Activated CD4-positive, alpha-beta T cell treated with anti-CD3 and anti-CD28 coated beads, Interleukin-2, amount 10 ng/mL, durations not matched to agents 24 days and 14 days (primary cell): ENCODE measurements at regions of chr1 and their contacts with region 1.

Region 1: DNA sequence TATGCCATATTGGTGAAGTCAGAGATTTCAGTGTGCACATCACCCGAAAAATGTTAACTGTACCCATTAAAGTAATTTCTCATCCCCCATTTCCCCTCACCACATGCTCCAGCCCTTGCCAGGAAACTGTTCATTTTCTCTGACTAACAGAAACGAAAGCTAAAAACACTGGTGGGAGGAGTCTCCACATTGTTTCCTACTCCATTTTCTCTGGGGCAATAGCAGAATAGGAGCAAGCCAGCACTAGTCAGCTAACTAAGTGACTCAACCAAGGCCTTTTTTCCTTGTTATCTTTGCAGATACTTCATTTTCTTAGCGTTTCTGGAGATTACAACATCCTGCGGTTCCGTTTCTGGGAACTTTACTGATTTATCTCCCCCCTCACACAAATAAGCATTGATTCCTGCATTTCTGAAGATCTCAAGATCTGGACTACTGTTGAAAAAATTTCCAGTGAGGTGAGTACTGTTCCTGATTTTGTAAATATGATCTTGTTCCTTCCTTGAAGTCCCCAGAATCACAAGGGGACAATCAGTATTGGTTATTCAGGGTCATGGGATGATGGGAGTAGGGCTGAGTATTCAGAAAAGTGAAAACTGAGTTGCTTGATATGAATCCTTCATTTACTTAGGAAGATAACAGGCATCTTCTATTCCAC is at the start of gene IFI16:
- DNase-seq: peak; percentile 93
- H3K4me3 Mint-ChIP-seq: peak within 1 kb of the TSS; percentile 92
- H3K27ac Mint-ChIP-seq: peak within 1 kb of the TSS; percentile 98
- H3K4me1 Mint-ChIP-seq: peaks cover 52% of the 10 kb centered on the region
- H3K27me3 Mint-ChIP-seq: no peaks in the 10 kb centered on the region
- total RNA-seq, gene IFI16: 217 and 223 TPM in 2 replicates

Region 2: GRCh38 chr1:158716335-158716734 is 293.5 kb before region 1 on chr1:
- intact Hi-C with region 1: loop called (anchors 5 kb)
- DNase-seq: no peak
- H3K4me3 Mint-ChIP-seq: no peak overlapping the region
- H3K27ac Mint-ChIP-seq: peak overlapping the region; percentile 58
- H3K4me1 Mint-ChIP-seq: peaks cover 5% of the 10 kb centered on the region
- H3K27me3 Mint-ChIP-seq: peaks cover 31% of the 10 kb centered on the region

Region 3: DNA sequence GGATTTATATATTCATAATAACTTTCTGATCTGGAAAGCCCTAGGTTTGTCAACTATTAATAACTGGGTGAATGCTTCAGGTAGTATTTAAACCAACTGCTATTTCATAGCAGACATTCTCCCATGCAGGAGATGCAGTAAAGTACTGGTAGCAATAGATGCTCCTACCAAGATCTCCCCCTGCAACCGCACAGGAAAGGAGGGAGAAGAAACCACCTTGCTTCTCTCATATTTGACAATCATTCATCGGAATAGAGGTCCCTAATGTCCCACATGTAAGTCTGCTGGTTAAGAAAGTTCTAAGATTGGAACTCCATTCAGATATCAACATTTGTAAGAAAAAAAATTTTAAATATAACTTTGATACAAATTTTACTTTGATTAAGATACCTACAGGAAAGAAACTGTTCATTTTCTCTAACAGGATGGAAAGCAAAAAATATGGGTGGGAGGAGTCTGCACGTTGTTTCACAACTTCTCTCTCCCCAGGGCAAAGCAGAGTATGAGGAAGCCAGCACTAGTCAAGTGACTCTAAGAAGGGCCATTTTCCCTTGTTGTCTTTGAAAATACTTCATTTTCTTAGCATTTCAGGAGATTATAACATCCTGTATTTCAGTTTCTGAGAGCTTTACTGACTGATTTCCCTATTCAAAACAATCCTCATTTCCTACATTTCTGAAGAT is 78.6 kb before region 1 on chr1 and contains the start of gene PYHIN1:
- intact Hi-C with region 1: loop called (anchors 1 kb)
- DNase-seq: peak; percentile 80
- H3K4me3 Mint-ChIP-seq: peak within 1 kb of the TSS; percentile 82
- H3K27ac Mint-ChIP-seq: peak within 1 kb of the TSS; percentile 83
- H3K4me1 Mint-ChIP-seq: peaks cover 25% of the 10 kb centered on the region
- H3K27me3 Mint-ChIP-seq: peaks cover under 1% of the 10 kb centered on the region
- total RNA-seq, gene PYHIN1: 10.4 and 11.3 TPM in 2 replicates

Region 4: GRCh38 chr1:159023723-159024122 is 13.9 kb after region 1 on chr1:
- intact Hi-C with region 1: no loop called
- DNase-seq: no peak
- H3K4me3 Mint-ChIP-seq: peak overlapping the region; percentile 51
- H3K27ac Mint-ChIP-seq: peak overlapping the region; percentile 54
- H3K4me1 Mint-ChIP-seq: peaks cover 69% of the 10 kb centered on the region
- H3K27me3 Mint-ChIP-seq: no peaks in the 10 kb centered on the region

Region 5: DNA sequence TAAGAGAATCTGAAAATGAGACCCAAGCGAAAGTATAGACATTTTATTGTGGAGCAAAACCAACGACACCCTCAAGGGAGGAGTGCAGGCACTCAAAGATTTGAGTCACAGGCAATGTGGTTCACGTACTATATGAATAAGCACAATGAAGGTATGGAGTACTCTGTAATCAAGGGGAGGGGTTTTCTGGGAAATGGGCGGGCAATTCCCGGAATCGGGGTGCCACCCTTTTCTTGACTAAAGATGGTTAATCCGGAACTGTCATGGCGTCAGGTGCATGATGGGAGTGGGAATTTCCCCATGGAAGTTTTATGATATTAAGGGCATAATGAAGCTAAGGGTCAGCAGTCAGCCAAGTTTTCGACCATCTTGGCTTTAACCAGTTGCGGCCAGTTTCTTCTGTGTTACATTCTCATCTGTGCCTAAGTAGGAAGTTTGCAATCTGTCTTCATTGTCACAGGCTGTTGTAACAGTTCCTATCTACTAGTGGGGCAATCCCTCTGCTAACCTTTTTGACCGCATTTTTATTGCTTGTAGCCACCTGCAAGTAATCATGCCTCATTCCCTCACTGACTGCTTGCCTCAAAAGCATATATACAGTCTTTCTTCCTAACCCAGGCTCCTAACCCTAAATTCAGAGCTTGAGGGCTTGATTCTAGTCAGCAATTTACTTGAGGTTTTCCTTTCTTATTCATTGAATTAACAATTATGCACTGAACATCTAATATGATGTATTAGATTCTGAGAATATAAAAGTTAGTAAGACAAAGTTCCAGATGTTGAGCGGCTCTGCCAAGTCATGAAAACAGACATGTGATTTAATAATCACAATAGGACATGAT is 67.5 kb after region 1 on chr1:
- intact Hi-C with region 1: loop called (anchors 1 kb)
- DNase-seq: peak; percentile 99
- H3K4me3 Mint-ChIP-seq: peak overlapping the region; percentile 87
- H3K27ac Mint-ChIP-seq: peak overlapping the region; percentile 99
- H3K4me1 Mint-ChIP-seq: peaks cover 34% of the 10 kb centered on the region
- H3K27me3 Mint-ChIP-seq: peaks cover 5% of the 10 kb centered on the region